ENCODE measurements at regions of chr7 and their contacts with region 1.

Region 1: DNA sequence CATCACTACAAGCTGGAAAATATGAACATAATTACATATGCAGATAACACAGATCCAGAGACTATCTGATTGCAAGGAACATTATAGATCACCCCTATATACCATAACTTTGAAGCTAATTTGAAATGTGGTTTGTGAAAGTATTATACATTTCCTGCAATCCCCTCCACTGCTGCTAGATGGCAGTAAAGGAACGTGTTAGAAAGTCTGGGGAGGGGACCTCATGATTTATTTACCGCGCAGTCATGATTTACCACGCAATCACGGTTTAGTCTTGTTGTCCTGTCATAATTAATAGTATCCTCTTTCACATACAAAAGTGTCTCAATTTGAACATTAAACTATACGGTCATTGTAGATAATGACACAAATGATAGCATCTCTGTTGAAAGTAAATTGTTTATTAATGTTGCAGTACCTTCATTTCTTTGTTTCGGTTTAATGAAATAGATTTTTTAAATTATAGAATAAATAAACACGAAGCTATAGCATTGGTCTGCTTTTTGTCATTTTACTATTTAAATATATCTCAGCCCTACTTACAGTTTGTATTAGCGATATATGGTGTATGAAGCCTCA is 145.3 kb upstream of the PRSS1 start:
- DNase-seq: peak; percentile 71
- H3K4me3 Mint-ChIP-seq: peak overlapping the region; percentile 8
- H3K27ac Mint-ChIP-seq: no peak overlapping the region
- H3K4me1 Mint-ChIP-seq: peaks cover 14% of the 10 kb centered on the region
- H3K27me3 Mint-ChIP-seq: no peaks in the 10 kb centered on the region
- CTCF ChIP-seq: peak; percentile 83

Region 2: DNA sequence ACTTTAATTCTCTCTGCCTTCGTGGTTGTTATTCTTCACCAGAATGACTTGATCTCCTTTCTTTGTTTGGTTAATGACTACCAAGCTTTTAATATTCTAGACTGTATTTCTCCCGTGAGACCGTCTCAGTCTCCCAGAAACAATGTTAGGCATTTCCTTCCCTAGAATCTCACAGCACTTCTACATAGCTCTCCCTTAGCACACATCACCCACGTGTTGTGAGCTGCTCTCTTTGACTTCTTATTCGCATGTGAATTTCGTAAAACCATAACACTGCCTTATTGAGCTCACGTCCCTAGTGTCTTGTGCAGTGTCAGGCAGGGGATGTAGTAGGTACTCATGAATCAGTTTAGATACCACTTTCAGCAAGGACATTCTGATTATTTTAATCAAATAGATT is 550.0 kb before region 1 on chr7:
- CTCF ChIA-PET with region 1: no interaction called
- POLR2A ChIA-PET with region 1: no interaction called
- intact Hi-C with region 1: no loop called
- DNase-seq: no peak
- H3K4me3 Mint-ChIP-seq: no peak overlapping the region
- H3K27ac Mint-ChIP-seq: no peak overlapping the region
- H3K4me1 Mint-ChIP-seq: no peaks in the 10 kb centered on the region
- H3K27me3 Mint-ChIP-seq: no peaks in the 10 kb centered on the region
- CTCF ChIP-seq: no peak

Region 3: DNA sequence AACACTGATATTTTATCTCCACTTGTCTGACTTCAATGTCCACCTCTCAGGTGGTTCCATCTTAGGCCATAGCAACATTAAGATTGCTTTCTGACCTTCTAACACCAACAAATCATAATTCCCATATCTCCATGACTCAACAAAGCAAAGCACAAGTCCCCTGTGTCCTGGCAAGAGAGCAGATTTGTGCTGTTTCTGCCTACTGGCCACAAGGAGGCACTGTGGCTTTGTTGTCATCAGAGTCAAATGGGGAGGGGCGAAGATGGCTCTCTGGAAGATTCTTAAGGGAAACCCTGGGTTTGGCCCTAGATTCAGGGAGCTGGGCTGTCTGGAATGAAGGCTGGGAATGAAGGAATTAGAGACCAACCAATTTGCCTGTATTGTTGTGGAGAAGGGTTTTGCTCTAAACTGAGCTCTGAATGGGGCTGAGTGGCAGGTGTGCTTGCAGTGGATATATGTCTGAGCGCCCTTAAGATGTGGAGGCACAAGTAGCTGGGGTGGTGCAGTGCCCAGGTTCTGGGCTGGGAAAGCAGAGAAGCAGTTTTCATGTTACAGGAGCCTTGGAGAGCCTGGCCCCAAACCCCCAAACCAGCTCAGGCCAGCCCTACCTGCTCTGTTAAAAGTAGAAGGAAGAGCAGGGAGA is 191.3 kb before region 1 on chr7:
- CTCF ChIA-PET with region 1: no interaction called
- POLR2A ChIA-PET with region 1: no interaction called
- intact Hi-C with region 1: no loop called
- DNase-seq: peak; percentile 66
- H3K4me3 Mint-ChIP-seq: no peak overlapping the region
- H3K27ac Mint-ChIP-seq: no peak overlapping the region
- H3K4me1 Mint-ChIP-seq: no peaks in the 10 kb centered on the region
- H3K27me3 Mint-ChIP-seq: no peaks in the 10 kb centered on the region
- CTCF ChIP-seq: peak; percentile 29

Region 4: GRCh38 chr7:142557971-142558582 is 45.9 kb before region 1 on chr7:
- CTCF ChIA-PET with region 1: interaction called, 6 read pairs
- POLR2A ChIA-PET with region 1: no interaction called
- intact Hi-C with region 1: loop called (anchors 5 kb)
- DNase-seq: peak; percentile 78
- H3K4me3 Mint-ChIP-seq: peak overlapping the region; percentile 35
- H3K27ac Mint-ChIP-seq: peak overlapping the region; percentile 88
- H3K4me1 Mint-ChIP-seq: peaks cover 48% of the 10 kb centered on the region
- H3K27me3 Mint-ChIP-seq: no peaks in the 10 kb centered on the region
- CTCF ChIP-seq: peak; percentile 59

Region 5: DNA sequence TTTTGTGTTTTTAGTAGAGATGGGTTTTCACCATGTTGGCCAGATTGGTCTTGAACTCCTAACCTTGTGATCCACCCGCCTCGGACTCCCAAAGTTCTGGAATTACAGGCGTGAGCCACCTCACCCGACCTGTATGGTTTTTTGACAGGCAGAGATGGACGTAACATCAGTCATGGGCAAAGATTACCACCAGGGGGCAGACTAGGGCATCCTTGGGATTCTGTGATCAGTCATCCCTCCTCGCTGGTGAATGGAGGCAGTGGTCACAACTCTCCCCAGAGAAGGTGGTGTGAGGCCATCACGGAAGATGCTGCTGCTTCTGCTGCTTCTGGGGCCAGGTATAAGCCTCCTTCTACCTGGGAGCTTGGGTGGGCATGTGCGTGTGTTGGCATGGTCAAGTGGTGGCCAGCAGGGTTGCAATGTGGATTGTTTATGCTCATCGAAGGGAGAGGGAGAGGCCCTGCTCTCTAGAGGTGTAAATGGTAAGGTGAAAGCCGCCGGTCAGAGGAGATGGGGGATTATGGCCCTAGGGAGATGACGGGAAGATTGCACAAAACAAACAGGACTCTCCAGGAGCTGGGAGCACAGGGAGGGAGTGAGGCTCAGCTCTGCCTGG is 22.6 kb after region 1 on chr7:
- CTCF ChIA-PET with region 1: interaction called, 36 read pairs
- POLR2A ChIA-PET with region 1: no interaction called
- intact Hi-C with region 1: no loop called
- DNase-seq: peak; percentile 77
- H3K4me3 Mint-ChIP-seq: no peak overlapping the region
- H3K27ac Mint-ChIP-seq: no peak overlapping the region
- H3K4me1 Mint-ChIP-seq: peaks cover 5% of the 10 kb centered on the region
- H3K27me3 Mint-ChIP-seq: no peaks in the 10 kb centered on the region
- CTCF ChIP-seq: peak; percentile 51

Region 6: DNA sequence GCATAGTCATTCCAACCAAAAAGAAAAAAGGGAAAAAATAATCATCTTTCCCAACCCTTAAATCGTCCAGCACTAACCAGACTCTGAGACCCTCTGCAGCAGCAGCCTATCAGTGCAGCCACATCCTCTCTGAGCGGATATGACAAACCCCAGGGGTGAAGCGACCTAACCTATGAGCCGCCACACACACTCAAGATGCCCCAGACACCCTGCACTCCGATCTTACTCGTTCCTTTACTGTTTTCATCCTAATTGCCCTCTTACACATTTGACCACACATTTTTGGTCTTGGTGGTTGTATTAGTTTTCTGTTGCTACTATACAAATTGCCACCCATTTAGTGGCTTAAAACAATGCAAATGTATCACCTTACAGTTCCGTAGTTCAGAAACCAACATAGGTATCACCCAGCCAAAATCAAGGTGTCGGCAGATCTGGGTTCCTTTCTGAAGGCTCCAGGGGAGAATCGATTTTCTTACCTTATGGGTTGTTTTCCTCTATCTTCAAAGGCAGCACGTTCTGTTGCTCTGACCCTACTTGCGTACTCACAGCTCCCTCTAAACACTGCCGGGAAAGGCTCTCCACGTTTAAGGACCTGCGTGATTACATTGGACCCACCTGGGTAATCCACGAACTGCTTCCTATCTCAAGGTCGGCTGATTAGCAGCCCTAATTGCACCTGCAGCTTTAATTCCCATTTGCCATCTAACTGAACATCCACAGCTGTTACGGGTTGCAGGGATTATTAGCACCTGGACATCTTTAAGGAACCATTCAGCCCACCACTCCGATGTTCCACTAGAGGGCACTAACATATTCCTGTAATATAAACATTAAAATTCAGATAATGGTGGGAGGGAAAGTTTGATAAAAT is 108.0 kb after region 1 on chr7:
- CTCF ChIA-PET with region 1: interaction called, 8 read pairs
- POLR2A ChIA-PET with region 1: interaction called, 3 read pairs
- intact Hi-C with region 1: loop called (anchors 2 kb)
- DNase-seq: peak; percentile 40
- H3K4me3 Mint-ChIP-seq: no peak overlapping the region
- H3K27ac Mint-ChIP-seq: no peak overlapping the region
- H3K4me1 Mint-ChIP-seq: no peaks in the 10 kb centered on the region
- H3K27me3 Mint-ChIP-seq: peaks cover 76% of the 10 kb centered on the region
- CTCF ChIP-seq: peak; percentile 47

Region 7: GRCh38 chr7:142796608-142797385 is 192.8 kb after region 1 on chr7:
- CTCF ChIA-PET with region 1: interaction called, 11 read pairs
- POLR2A ChIA-PET with region 1: no interaction called
- intact Hi-C with region 1: no loop called
- DNase-seq: no peak
- H3K4me3 Mint-ChIP-seq: no peak overlapping the region
- H3K27ac Mint-ChIP-seq: no peak overlapping the region
- H3K4me1 Mint-ChIP-seq: peaks cover 11% of the 10 kb centered on the region
- H3K27me3 Mint-ChIP-seq: peaks cover 77% of the 10 kb centered on the region
- CTCF ChIP-seq: no peak

Measured in MCF 10A (cell line).